Dorsolateral prefrontal cortex (tissue), 120 donors: ENCODE measurements at regions of chr11 and their contacts with region 1.

Region 1: DNA sequence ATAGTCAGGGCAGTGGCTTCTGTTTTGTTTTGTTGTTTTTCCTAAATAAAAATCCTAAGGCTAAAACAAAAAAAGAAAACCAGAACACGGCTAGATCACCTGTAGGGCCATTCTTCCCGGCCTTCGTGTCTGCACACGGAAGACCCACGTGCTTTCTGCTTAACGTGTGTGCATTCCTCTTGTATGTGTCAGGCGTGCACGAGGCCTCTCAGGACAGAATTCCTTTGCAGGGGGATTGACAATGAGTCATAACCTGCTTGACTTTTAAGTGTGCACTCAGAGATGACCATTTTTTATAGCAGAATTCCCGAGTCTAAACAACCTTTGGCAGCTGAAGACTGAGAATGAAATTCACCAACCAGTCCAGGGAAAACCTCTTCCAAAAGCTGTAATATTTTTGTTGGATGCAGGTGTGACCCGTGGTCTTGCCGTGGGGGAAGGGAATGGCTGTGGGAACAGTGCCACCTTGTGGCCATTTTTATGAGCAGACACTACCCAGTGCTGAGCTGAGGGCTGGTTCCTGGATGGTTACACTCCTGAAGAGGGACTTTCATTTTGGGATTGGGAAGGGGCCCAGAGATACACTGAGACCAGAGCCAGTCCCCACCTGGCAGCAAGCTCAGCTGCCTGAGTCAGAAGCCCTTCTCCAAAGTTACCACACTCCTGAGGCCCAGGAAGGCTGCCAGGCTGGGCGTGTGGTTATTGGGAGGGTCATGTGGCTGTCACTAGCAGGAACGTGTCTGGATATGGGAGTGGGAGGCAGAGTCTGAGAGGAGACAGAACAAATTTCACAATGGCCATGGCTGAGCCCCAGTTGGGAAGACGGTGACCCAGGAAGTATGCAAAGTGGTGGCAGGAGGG is 35.8 kb upstream of the DKK3 start:
- DNase-seq: peak; percentile 58 to 87 (median 80)
- H3K4me3 ChIP-seq: peak overlapping the region in 27 of 59 donors; percentile 2 to 49 (median 20)
- H3K27ac ChIP-seq: peak overlapping the region in 33 of 59 donors; percentile 2 to 76 (median 46)
- H3K27me3 ChIP-seq: no peaks in the 10 kb centered on the region
- CTCF ChIP-seq: peak; percentile 91 to 100 (median 96)

Region 2: DNA sequence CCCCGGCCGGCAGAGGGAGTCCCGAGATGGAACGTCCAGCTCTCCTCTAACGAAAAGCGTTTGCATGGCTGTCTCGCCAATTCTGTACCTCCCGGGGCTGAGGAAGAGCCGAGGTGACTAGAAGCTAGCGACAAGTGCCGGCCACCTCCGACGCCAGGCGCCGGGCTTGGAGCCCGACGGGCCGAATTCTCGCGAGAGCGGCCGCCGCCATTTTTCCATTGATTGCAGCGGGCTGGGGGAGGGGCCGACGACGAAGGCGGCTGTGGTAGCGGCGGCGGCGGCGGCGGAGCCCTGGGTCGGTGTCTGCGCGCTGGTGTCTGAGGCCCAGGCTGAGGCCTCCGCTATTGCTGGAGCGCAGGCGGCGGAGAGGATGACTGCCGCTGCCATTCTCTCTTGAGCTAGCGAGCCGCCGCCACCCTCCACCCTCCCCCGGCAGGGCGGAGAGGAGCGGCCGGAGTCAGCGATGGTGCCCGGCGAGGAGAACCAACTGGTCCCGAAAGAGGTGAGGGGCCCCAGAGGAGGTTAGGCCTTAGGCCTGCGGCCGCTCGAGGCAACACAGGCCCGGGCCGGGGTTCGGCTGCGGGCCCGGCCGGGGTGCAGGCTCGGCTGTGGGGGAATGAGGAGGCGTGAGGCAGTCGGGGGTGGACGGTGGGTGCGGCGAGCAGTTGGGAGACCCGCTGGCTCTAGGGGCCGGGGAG is 202.3 kb before region 1 on chr11 and contains the start of gene USP47:
- intact Hi-C with region 1: loop called in 1 of 2 experiments (anchors 5 kb)
- DNase-seq: peak; percentile 73 to 90 (median 86)
- H3K4me3 ChIP-seq: peak within 1 kb of the TSS; percentile 56 to 93 (median 82)
- H3K27ac ChIP-seq: peak within 1 kb of the TSS; percentile 89 to 100 (median 99)
- H3K27me3 ChIP-seq: no peaks in the 10 kb centered on the region
- CTCF ChIP-seq: peak in 54 of 56 donors; percentile 18 to 82 (median 66)
- total RNA-seq, gene USP47: 49.7 to 92.3 (median 69.2) TPM

Region 3: GRCh38 chr11:11973361-11973800 is 70.8 kb before region 1 on chr11:
- intact Hi-C with region 1: loop called in 1 of 2 experiments (anchors 5 kb)
- DNase-seq: peak; percentile 44 to 91 (median 80)
- H3K4me3 ChIP-seq: peak overlapping the region in 6 of 59 donors; percentile 0 to 16 (median 6)
- H3K27ac ChIP-seq: peak overlapping the region; percentile 21 to 93 (median 84)
- H3K27me3 ChIP-seq: no peaks in the 10 kb centered on the region
- CTCF ChIP-seq: peak in 5 of 56 donors; percentile 9 to 24 (median 14)

Region 4: DNA sequence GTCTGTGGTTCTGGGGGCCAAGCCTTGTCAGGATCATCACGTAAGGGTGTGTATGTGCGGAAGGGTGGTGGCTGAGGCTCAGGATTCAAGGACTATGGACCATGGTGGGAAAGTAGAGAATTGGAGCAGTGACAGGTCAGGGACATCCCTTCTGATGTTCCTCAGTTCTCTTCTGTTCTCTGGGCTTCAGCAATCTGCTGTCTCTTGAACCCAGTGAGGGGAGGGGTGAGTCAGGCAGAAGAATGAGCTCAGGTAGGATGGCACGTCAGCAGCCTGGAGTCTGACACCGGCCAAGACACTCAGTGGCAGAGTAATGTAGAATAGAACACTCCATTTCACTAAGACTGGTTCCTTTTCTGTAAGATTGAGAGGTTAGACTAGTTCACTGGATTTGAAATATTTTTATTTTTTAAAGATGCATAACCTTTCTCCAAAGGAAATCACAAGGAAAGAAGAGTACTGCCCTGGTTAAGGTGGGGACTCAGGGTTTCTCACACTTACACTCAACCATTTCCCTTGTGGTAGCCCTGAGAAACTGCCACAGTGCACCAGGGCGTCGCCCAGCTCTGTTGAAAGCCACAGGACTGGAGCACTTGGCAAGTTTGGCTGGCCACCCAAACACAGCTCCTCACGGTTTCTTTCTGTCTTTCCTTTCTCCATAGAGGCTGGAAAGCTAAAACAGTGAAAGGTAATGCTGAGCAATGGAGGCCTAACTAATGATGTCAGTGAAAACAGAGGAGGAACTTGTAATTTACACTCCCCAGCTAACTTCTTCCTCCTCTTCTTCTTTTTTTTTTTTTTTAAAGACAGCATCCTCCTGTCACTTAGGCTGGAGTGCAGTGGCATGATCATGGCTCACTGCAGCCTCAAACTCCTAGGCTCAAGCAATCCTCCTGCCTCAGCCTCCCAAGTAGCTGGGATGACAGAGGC is 43.2 kb after region 1 on chr11:
- intact Hi-C with region 1: loop called in 1 of 2 experiments (anchors 2 kb)
- DNase-seq: no peak
- H3K4me3 ChIP-seq: no peak overlapping the region
- H3K27ac ChIP-seq: peak overlapping the region in 52 of 59 donors; percentile 8 to 92 (median 67)
- H3K27me3 ChIP-seq: peaks cover 0 to 4% (median 0%) of the 10 kb centered on the region in 45 donors
- CTCF ChIP-seq: no peak